ENCODE measurements at regions of chr4 and their contacts with region 1.

Region 1: DNA sequence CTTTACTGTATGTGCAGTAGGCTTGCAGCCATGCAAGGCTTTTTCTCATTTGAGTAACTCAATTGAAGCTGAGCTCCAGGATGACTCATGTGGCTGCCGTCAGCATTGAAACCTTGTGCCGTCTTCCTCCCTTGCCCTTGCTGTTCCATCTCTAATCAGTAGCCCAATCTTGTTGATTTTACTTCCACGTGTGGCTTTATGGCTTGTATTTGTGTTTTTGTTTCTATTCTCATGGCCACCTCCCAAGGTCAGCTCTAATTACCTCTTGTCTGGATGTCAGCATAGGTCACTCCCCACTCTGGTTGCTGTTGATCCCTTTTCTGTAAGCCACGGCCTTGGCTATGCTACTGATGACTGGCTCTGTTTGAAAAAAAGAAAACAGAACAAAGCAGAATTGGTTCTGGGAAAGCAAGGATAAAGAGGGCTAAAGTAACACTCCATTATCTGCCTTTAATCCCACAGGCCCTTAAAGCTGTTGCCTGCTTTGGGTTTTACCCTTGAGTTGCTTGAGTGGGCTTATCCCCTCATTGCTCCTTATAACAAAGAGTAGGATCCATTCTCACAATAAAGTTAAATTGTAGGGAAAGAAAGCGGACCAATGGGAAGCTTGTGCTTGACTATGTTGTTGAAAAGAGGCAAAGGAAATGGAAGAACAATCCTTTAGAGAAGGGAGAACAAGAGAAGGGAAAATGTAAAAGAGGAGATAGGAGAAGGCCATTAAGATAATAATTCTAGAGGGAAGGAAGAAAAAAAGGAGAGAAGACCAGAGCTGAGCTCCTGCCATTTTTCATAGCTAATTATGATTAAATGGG is 173.9 kb upstream of the PGRMC2 start:
- DNase-seq: peak in 2 of 10 donors; percentile 21 to 86

Region 2: GRCh38 chr4:128512767-128513322 is 51.3 kb after region 1 on chr4:
- intact Hi-C with region 1: no loop called
- DNase-seq: no peak

Region 3: GRCh38 chr4:128558896-128559679 is 97.6 kb after region 1 on chr4:
- intact Hi-C with region 1: loop called (anchors 10 kb)
- DNase-seq: no peak